ENCODE measurements at regions of chr11 and their contacts with region 1.

Region 1: GRCh38 chr11:44286268-44286880 is 23.6 kb downstream of the ALX4 start:
- H3K4me3 ChIP-seq: no peak overlapping the region
- H3K27ac ChIP-seq: no peak overlapping the region
- H3K4me1 ChIP-seq: no peaks in the 10 kb centered on the region
- CTCF ChIP-seq: peak; percentile 52; the same call in 1 of the 2 replicates

Region 2: GRCh38 chr11:44133335-44133946 is 152.9 kb before region 1 on chr11:
- CTCF ChIA-PET with region 1: interaction called, 19 read pairs
- POLR2A ChIA-PET with region 1: no interaction called
- H3K4me3 ChIP-seq: no peak overlapping the region
- H3K27ac ChIP-seq: no peak overlapping the region
- H3K4me1 ChIP-seq: no peaks in the 10 kb centered on the region
- CTCF ChIP-seq: no peak

Region 3: GRCh38 chr11:44252999-44253602 is 33.3 kb before region 1 on chr11:
- CTCF ChIA-PET with region 1: no interaction called
- POLR2A ChIA-PET with region 1: no interaction called
- H3K4me3 ChIP-seq: no peak overlapping the region
- H3K27ac ChIP-seq: no peak overlapping the region
- H3K4me1 ChIP-seq: no peaks in the 10 kb centered on the region
- CTCF ChIP-seq: no peak

Region 4: DNA sequence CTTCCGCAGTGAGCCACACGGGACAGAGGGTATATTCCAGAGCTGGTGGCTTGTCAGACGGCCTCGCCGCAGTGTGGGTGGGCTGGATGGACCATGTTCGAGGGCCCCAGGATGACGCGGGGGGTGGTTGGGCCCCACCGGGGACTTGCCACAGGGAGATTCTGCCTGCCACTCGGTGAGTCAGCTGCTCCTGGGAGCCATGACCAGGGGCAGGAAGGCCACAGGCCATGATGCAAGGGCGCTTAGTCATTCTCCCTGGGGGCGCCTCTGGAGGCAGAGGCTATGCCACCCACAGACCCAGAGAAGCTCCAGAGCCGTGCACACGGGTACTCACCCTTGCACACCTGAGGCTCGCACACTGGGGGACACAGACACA is 15.5 kb after region 1 on chr11:
- CTCF ChIA-PET with region 1: interaction called, 12 read pairs
- POLR2A ChIA-PET with region 1: no interaction called
- H3K4me3 ChIP-seq: no peak overlapping the region
- H3K27ac ChIP-seq: no peak overlapping the region
- H3K4me1 ChIP-seq: no peaks in the 10 kb centered on the region
- CTCF ChIP-seq: no peak

Region 5: DNA sequence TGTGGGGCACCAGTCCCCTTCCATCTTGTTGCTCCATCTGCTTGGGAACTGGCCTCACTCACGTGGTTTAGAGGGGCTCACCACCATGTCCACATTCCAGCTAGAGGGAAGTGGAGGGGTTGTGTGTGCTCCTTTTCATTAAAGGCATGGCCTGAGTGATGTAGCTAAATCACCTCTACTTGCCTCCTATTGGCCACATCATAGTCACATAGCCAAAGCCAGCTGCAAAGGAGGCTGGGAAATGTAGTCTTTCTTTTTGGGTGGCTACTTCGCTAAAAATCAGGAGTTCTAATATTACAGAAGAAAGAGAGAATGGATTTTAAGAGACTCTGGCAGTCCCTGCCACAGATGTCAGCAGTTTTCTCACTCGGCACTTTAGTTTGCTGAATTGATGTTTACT is 86.6 kb after region 1 on chr11:
- CTCF ChIA-PET with region 1: no interaction called
- POLR2A ChIA-PET with region 1: no interaction called
- H3K4me3 ChIP-seq: no peak overlapping the region
- H3K27ac ChIP-seq: no peak overlapping the region
- H3K4me1 ChIP-seq: no peaks in the 10 kb centered on the region
- CTCF ChIP-seq: no peak

Region 6: GRCh38 chr11:44538375-44539054 is 252.1 kb after region 1 on chr11:
- CTCF ChIA-PET with region 1: interaction called, 29 read pairs
- POLR2A ChIA-PET with region 1: no interaction called
- H3K4me3 ChIP-seq: no peak overlapping the region
- H3K27ac ChIP-seq: no peak overlapping the region
- H3K4me1 ChIP-seq: no peaks in the 10 kb centered on the region
- CTCF ChIP-seq: peak; percentile 80